ENCODE measurements at regions of chr7 and their contacts with region 1.

Region 1: DNA sequence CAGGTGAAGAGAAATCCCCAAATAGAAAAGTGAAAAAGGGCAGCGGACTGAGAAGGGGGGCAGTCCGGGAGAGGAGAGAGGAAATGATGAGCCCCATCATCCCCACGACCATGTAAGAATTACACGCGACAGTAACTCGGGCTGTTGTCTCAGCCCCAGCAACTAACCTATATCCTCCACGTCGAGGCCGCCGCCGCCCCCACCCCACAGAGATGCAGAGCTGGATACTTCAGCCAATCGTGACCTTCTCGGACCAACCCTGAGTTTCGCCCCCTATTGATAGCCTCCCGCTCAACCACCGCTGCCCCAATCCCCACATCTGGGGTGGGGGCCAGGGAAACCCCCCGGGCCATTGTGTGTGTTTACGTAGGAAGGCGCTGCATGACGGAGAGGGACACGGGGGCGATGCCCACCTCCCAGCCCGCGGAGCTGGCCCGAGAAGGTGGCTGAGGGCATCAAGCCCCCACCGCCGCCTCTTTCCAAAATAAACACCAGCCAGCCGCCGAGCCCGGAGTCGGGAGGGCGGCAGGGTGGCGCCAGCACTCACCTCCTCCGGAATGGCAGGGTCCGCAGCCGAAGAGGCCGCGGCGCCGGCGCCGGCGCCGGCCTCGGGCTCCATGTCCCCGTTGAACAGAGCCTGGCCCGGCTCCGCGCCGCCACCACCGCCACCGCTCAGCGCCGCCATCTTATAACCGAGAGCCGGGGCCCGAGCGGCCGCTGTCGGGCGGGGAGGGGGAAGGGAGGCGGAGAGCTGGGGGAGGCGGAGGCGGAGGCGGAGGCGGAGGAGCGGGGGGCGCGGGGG is 509 bp downstream of the BRAF start:
- DNase-seq: peak; percentile 61 to 89 (median 70)
- ATAC-seq: peak; percentile 84
- H3K4me3 ChIP-seq: peak overlapping the region; percentile 85
- H3K4me3 Mint-ChIP-seq: peak overlapping the region in 1 of 10 donors; percentile 89
- H3K27ac ChIP-seq: peak overlapping the region; percentile 100
- H3K27ac Mint-ChIP-seq: peak overlapping the region in 3 of 9 donors; percentile 92 to 99 (median 94)
- H3K4me1 ChIP-seq: peaks cover 9 to 18% of the 10 kb centered on the region in 2 donors
- H3K4me1 Mint-ChIP-seq: peaks cover 10 to 44% (median 22%) of the 10 kb centered on the region in 7 donors
- H3K27me3 ChIP-seq: no peaks in the 10 kb centered on the region
- H3K27me3 Mint-ChIP-seq: peaks cover 0 to 5% (median 0%) of the 10 kb centered on the region in 5 donors

Region 2: DNA sequence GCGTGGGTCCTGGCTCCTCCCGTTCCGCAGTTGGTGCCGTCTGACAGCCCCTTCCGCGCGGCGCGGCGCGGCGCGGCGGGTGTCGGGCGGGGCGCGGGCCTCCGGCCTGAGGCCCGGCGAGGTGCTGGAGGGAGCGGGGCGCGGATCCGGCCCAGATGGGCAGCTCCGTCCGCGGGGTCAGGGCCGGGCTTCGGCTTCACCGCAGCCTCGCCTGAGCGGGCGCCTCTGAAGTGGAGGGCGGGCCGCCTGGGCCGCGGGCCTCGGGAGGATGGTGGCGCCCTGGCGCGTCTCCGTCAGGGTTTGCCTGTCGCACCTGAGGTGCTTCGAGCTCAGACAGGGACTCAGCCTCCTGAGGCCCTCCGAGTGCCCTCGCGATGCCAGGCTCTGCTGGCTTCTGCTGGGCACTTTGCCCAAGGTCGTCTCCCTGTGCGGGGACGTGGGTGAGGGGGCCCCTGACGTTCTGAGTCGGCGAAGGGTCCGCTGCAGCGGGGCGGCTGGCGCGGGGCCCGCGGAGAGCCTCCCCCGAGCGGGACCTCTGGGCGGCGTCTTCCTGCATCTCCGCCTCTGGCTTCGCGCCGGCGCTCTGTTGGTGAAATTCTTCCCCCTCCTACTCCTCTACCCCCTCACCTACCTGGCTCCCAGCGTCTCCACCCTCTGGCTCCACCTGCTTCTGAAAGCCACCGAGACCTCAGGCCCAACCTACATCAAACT is 251.0 kb before region 1 on chr7:
- CTCF ChIA-PET with region 1: no interaction called
- POLR2A ChIA-PET with region 1: interaction called, 3 read pairs
- intact Hi-C with region 1: loop called (anchors 2 kb)
- DNase-seq: peak; percentile 56 to 78 (median 75)
- ATAC-seq: peak; percentile 82
- H3K4me3 ChIP-seq: peak overlapping the region; percentile 82
- H3K4me3 Mint-ChIP-seq: peak overlapping the region; percentile 81 to 94 (median 89)
- H3K27ac ChIP-seq: peak overlapping the region; percentile 91
- H3K27ac Mint-ChIP-seq: peak overlapping the region; percentile 68 to 97 (median 88)
- H3K4me1 ChIP-seq: peaks cover 11 to 14% of the 10 kb centered on the region in 2 donors
- H3K4me1 Mint-ChIP-seq: peaks cover 16 to 42% (median 37%) of the 10 kb centered on the region in 7 donors
- H3K27me3 ChIP-seq: no peaks in the 10 kb centered on the region
- H3K27me3 Mint-ChIP-seq: peaks cover 0 to 7% (median 0%) of the 10 kb centered on the region in 5 donors

Region 3: GRCh38 chr7:140810830-140811556 is 113.2 kb before region 1 on chr7:
- CTCF ChIA-PET with region 1: interaction called, 7 read pairs
- POLR2A ChIA-PET with region 1: no interaction called
- intact Hi-C with region 1: loop called (anchors 1 kb)
- DNase-seq: peak; percentile 19 to 76 (median 65)
- ATAC-seq: peak; percentile 91
- H3K4me3 ChIP-seq: no peak overlapping the region
- H3K4me3 Mint-ChIP-seq: no peak overlapping the region
- H3K27ac ChIP-seq: no peak overlapping the region
- H3K27ac Mint-ChIP-seq: peak overlapping the region in 6 of 9 donors; percentile 6 to 82 (median 60)
- H3K4me1 ChIP-seq: no peaks in the 10 kb centered on the region
- H3K4me1 Mint-ChIP-seq: peaks cover 0 to 22% (median 4%) of the 10 kb centered on the region in 7 donors
- H3K27me3 ChIP-seq: no peaks in the 10 kb centered on the region
- H3K27me3 Mint-ChIP-seq: no peaks in the 10 kb centered on the region

Region 4: GRCh38 chr7:140902303-140902953 is 21.8 kb before region 1 on chr7:
- CTCF ChIA-PET with region 1: no interaction called
- POLR2A ChIA-PET with region 1: interaction called, 10 read pairs
- intact Hi-C with region 1: loop called (anchors 1 kb)
- DNase-seq: peak in 7 of 9 donors; percentile 36 to 71 (median 60)
- ATAC-seq: peak; percentile 65
- H3K4me3 ChIP-seq: peak overlapping the region; percentile 28
- H3K4me3 Mint-ChIP-seq: peak overlapping the region; percentile 58 to 83 (median 72)
- H3K27ac ChIP-seq: peak overlapping the region; percentile 58
- H3K27ac Mint-ChIP-seq: peak overlapping the region; percentile 73 to 94 (median 87)
- H3K4me1 ChIP-seq: peaks cover 0 to 11% of the 10 kb centered on the region in 2 donors
- H3K4me1 Mint-ChIP-seq: peaks cover 31 to 84% (median 75%) of the 10 kb centered on the region in 7 donors
- H3K27me3 ChIP-seq: no peaks in the 10 kb centered on the region
- H3K27me3 Mint-ChIP-seq: no peaks in the 10 kb centered on the region

Region 5: DNA sequence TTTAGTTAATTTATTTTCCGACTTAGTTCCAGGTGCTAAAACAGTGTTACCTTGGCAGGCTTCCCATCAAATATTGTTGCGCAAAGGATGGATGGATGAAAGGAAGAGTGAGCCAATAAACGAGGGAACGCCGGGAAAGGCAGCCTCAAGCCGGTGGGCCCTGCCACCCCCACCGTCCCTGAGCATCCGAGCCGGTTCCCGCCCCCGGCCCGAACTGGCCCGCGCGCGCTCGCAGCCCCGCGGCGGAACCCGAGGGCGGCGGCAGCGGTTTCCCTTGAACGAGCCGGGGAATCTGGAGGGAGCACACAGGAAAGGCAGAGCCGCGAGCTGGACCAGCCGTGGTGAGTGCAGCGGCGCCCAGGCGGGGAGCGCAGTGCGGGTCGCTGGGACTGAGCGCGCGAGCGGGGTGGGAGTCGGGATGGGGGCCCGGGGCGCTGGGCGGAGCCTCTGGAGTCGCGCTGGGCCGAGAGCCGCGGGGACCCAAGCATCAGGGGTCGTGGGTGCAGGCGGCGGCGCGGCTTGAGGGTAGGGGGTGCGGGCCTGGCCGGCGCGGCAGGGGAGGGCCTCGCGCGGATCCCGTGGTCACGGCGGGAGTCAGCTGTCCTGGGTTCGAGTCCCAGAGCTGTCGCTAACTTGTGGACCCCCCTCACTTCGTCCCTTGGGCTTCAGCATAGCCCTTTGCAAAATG is 627.0 kb after region 1 on chr7 and contains the start of gene AGK:
- CTCF ChIA-PET with region 1: no interaction called
- POLR2A ChIA-PET with region 1: no interaction called
- intact Hi-C with region 1: loop called in 1 of 2 experiments (anchors 10 kb)
- DNase-seq: peak; percentile 61 to 83 (median 74)
- ATAC-seq: peak; percentile 96
- H3K4me3 ChIP-seq: peak within 1 kb of the TSS; percentile 89
- H3K4me3 Mint-ChIP-seq: peak within 1 kb of the TSS; percentile 83 to 99 (median 92)
- H3K27ac ChIP-seq: peak within 1 kb of the TSS; percentile 73
- H3K27ac Mint-ChIP-seq: peak within 1 kb of the TSS; percentile 52 to 96 (median 90)
- H3K4me1 ChIP-seq: peaks cover 12 to 17% of the 10 kb centered on the region in 2 donors
- H3K4me1 Mint-ChIP-seq: peaks cover 14 to 44% (median 40%) of the 10 kb centered on the region in 7 donors
- H3K27me3 ChIP-seq: no peaks in the 10 kb centered on the region
- H3K27me3 Mint-ChIP-seq: peaks cover 0 to 4% (median 0%) of the 10 kb centered on the region in 5 donors
- total RNA-seq, gene AGK: 24.3 to 58.8 (median 29.9) TPM

Measured in naive thymus-derived CD4-positive, alpha-beta T cell (primary cell).